Activated naive CD4-positive, alpha-beta T cell treated with anti-CD3 and anti-CD28 coated beads, Interleukin-2, amount 10 ng/mL, durations not matched to agents 7 days and 5 days (primary cell): ENCODE measurements at regions of chr18 and their contacts with region 1.

Region 1: GRCh38 chr18:12038639-12039417 is 54.8 kb upstream of the ANKRD62 start:
- DNase-seq: peak; percentile 78
- H3K4me3 Mint-ChIP-seq: peak overlapping the region; percentile 44
- H3K27ac Mint-ChIP-seq: no peak overlapping the region
- H3K4me1 Mint-ChIP-seq: no peaks in the 10 kb centered on the region
- H3K27me3 Mint-ChIP-seq: peaks cover 40% of the 10 kb centered on the region

Region 2: DNA sequence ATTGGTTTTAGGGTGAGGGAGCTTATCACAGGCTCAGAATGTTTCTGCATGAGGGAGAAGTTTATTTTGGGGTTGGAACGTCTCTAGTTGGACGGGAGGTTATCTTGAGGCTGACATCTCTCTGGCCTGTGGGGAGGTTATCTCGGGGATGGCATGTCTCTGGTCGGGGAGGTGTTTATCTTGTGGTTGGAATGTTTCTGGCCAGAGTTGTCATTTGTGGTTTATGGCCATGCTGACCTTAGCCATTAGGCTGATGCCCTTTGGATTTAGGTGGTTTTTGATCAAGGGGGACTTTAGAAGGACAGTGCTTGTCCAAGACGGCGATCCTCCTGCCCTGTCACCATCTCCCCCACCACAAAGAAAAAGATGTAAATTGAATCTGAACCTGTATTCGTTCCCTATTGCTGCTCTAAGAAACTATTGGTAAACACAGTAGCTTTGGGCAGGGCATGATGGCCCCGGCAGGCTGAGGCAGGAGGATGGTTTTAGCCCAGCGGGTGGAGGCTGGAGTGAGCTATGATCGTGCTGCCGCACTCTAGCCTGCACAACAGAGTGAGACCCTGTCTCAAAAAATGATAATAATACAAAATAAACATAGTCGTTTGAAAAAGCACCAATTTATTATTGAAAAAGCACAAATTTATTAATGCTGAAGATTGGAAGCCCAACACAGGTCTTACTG is 112.9 kb before region 1 on chr18:
- CTCF ChIA-PET with region 1: no interaction called
- DNase-seq: no peak
- H3K4me3 Mint-ChIP-seq: no peak overlapping the region
- H3K27ac Mint-ChIP-seq: no peak overlapping the region
- H3K4me1 Mint-ChIP-seq: peaks cover 3% of the 10 kb centered on the region
- H3K27me3 Mint-ChIP-seq: peaks cover 11% of the 10 kb centered on the region

Region 3: GRCh38 chr18:12049978-12050811 is 11.4 kb after region 1 on chr18:
- CTCF ChIA-PET with region 1: interaction called, 13 read pairs
- DNase-seq: no peak
- H3K4me3 Mint-ChIP-seq: no peak overlapping the region
- H3K27ac Mint-ChIP-seq: no peak overlapping the region
- H3K4me1 Mint-ChIP-seq: no peaks in the 10 kb centered on the region
- H3K27me3 Mint-ChIP-seq: peaks cover 7% of the 10 kb centered on the region

Region 4: GRCh38 chr18:12287684-12288402 is 249.0 kb after region 1 on chr18:
- CTCF ChIA-PET with region 1: no interaction called
- DNase-seq: no peak
- H3K4me3 Mint-ChIP-seq: no peak overlapping the region
- H3K27ac Mint-ChIP-seq: no peak overlapping the region
- H3K4me1 Mint-ChIP-seq: peaks cover 3% of the 10 kb centered on the region
- H3K27me3 Mint-ChIP-seq: peaks cover 80% of the 10 kb centered on the region

Region 5: GRCh38 chr18:12352188-12352587 is 313.4 kb after region 1 on chr18:
- CTCF ChIA-PET with region 1: no interaction called
- DNase-seq: no peak
- H3K4me3 Mint-ChIP-seq: no peak overlapping the region
- H3K27ac Mint-ChIP-seq: no peak overlapping the region
- H3K4me1 Mint-ChIP-seq: no peaks in the 10 kb centered on the region
- H3K27me3 Mint-ChIP-seq: no peaks in the 10 kb centered on the region